Calu3 (cell line): ENCODE measurements at regions of chr15 and their contacts with region 1.

Region 1: GRCh38 chr15:101008158-101009139 is 89.3 kb downstream of the LRRK1 start:
- DNase-seq: peak; percentile 97
- H3K4me3 Mint-ChIP-seq: peak overlapping the region; percentile 89
- H3K27ac Mint-ChIP-seq: peak overlapping the region; percentile 92
- H3K4me1 Mint-ChIP-seq: peaks cover 31% of the 10 kb centered on the region
- H3K27me3 Mint-ChIP-seq: no peaks in the 10 kb centered on the region
- CTCF ChIP-seq: peak; percentile 97

Region 2: DNA sequence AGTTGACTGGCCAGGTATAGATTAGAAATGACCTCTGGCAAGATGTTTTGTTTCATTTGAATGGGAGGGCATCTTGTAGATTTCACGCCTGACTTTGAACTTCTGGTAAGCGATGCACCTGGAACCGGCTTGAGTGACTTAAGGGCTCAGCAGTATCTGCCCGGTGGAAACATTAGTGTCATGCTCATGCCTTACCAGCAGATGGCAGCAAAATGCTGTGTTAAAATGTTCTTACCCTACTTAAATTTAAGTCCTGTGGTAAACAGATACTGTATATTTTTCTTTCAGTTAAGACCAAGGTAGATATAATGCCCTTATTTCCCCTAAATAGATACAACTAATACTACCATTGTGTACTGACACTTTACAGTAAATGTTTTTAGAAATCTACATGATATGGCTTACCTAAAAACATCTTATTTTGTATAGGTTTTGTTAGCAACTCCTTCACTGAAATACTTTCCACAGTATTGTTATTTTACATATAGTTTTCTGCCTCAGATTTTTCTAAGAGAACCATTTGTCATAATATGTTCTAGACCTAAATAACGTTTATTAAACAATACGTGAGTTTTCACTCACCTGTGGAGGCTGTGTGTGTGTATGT is 380.6 kb before region 1 on chr15:
- CTCF ChIA-PET with region 1: interaction called, 6 read pairs
- intact Hi-C with region 1: loop called (anchors 1 kb)
- DNase-seq: peak; percentile 76
- H3K4me3 Mint-ChIP-seq: no peak overlapping the region
- H3K27ac Mint-ChIP-seq: no peak overlapping the region
- H3K4me1 Mint-ChIP-seq: peaks cover 14% of the 10 kb centered on the region
- H3K27me3 Mint-ChIP-seq: no peaks in the 10 kb centered on the region
- CTCF ChIP-seq: peak; percentile 61

Region 3: DNA sequence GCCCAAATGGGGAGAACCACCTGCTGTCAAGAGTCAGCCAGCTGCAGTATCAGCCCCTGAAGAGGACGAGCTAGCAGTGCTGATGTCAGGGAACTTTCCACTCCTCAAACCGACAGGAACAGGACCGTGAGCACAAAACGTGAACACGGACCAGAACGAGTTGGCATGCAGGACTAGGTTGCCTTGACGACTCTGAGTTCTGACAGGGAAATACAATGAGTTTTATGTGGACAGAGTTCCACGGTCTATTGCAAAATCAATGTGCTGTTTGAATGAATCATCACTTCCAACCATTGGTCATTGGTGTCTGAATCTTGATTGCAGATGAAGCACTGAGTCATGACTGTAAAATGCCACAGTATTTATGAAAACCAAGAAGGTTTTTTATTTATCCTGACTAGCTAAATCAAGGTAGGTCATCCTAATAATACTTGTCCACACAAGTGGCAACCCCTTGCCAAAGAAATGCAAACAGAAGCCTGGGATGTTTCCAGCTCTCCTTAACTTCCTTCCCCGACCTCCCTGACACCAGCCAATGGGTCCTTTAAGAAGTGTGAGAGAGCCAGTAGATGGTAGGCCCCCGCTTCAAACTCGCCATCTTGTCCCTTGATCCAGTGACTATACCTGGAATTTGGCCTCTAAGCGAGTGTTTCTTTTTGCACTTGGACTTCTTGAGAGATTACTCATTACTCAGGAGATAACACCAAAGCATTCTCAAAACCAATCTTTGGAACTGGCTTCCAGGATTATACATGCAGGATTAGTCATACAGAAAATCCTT is 286.5 kb before region 1 on chr15:
- CTCF ChIA-PET with region 1: no interaction called
- intact Hi-C with region 1: loop called (anchors 5 kb)
- DNase-seq: peak; percentile 89
- H3K4me3 Mint-ChIP-seq: peak overlapping the region; percentile 48
- H3K27ac Mint-ChIP-seq: peak overlapping the region; percentile 97
- H3K4me1 Mint-ChIP-seq: peaks cover 78% of the 10 kb centered on the region
- H3K27me3 Mint-ChIP-seq: no peaks in the 10 kb centered on the region
- CTCF ChIP-seq: no peak

Region 4: DNA sequence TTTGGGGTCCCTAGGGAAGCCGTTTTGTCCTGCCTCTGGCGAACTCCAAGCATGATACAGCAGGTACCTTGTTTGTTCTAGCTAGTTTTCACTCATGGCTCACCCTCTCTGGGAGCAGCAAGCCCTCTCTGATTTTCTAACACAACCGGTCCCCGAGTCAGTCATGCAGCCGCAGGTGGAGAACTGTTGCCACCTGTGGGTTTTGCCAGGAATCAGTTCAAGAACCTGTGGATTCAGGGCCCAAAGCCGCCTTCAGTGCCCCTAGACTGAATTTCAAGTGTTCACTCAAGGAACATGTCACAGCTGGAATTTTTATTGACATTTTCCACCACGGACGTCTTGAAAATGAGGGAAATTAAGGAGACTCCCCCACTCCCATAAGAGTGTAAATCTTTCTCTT is 102.6 kb before region 1 on chr15:
- CTCF ChIA-PET with region 1: no interaction called
- intact Hi-C with region 1: no loop called
- DNase-seq: no peak
- H3K4me3 Mint-ChIP-seq: no peak overlapping the region
- H3K27ac Mint-ChIP-seq: peak overlapping the region; percentile 61
- H3K4me1 Mint-ChIP-seq: peaks cover 24% of the 10 kb centered on the region
- H3K27me3 Mint-ChIP-seq: no peaks in the 10 kb centered on the region
- CTCF ChIP-seq: no peak

Region 5: GRCh38 chr15:100918034-100918689 is 90.3 kb before region 1 on chr15:
- CTCF ChIA-PET with region 1: interaction called, 93 read pairs
- intact Hi-C with region 1: loop called (anchors 1 kb)
- DNase-seq: peak; percentile 95
- H3K4me3 Mint-ChIP-seq: peak overlapping the region; percentile 82
- H3K27ac Mint-ChIP-seq: peak overlapping the region; percentile 82
- H3K4me1 Mint-ChIP-seq: peaks cover 41% of the 10 kb centered on the region
- H3K27me3 Mint-ChIP-seq: no peaks in the 10 kb centered on the region
- CTCF ChIP-seq: peak; percentile 96

Region 6: DNA sequence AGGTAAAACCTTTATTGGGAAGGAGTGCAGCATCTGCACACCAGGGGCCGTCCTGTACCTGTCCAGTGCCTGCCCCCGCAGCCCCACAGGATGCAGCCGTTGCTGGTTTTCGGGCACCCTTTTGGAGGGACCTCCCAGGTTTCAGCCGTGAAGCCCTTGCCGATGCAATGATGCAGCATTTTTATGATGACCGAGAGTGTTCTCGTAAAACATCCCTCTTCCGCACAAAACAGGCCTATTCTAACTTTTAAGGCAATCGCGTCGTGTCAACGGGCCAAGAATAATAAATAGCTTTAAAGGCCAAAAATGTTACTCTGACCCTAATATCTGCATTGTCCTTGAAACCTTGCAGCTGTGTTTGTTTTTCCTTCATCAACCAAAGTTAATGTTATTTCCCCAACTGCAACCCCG is 36.8 kb after region 1 on chr15:
- CTCF ChIA-PET with region 1: no interaction called
- intact Hi-C with region 1: no loop called
- DNase-seq: no peak
- H3K4me3 Mint-ChIP-seq: no peak overlapping the region
- H3K27ac Mint-ChIP-seq: no peak overlapping the region
- H3K4me1 Mint-ChIP-seq: no peaks in the 10 kb centered on the region
- H3K27me3 Mint-ChIP-seq: no peaks in the 10 kb centered on the region
- CTCF ChIP-seq: no peak

Region 7: GRCh38 chr15:101267320-101268104 is 259.1 kb after region 1 on chr15:
- CTCF ChIA-PET with region 1: no interaction called
- intact Hi-C with region 1: no loop called
- DNase-seq: no peak
- H3K4me3 Mint-ChIP-seq: no peak overlapping the region
- H3K27ac Mint-ChIP-seq: peak overlapping the region; percentile 33
- H3K4me1 Mint-ChIP-seq: no peaks in the 10 kb centered on the region
- H3K27me3 Mint-ChIP-seq: peaks cover 5% of the 10 kb centered on the region
- CTCF ChIP-seq: no peak